Heart left ventricle (tissue), 16 donors: ENCODE measurements at regions of chr5 and their contacts with region 1.

Region 1: DNA sequence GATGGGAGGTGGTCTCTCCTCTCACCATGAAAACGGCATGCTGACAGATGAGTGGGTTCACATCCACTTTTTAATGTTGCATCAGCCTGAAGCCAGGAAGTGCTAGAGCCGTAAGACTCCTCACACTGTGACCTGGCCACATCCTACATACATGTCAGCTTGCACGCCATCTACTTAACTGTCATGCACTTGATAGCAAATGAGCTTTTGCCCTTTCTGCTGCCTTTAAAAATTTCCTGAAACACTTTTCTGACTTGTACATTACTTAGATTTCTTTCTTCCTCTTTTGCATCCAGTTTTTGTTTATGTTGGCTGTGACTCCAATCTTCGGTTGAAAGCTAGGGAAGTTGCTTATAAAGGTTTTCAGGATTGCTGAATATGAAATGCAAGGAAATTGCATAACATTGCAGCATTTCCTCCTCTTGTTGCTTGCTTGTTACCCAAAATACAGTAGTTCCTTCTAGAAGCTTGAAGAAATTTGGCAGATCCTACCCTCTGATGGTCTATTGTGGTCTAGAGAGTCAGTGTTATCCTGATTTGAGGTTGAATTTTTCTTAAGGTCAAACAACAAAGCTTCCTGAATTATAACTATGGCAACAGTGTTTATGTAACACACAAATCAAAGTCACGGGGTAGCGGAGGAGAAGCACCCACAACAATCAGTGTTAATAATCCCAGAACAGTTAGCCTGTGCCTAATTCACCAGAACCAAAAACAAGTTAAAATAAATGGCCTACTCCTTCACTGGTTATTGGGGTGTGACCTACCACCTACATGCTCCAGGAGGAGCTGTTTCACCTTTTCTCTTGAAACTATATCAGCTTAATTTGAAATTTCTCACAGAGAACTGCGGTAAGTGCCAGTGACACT is 232.5 kb downstream of the ARHGAP26 start:
- DNase-seq: peak in 1 of 5 donors; percentile 41
- ATAC-seq: peak; percentile 66 to 87 (median 82)
- H3K4me3 ChIP-seq: peak overlapping the region in 2 of 12 donors; percentile 6 to 8
- H3K27ac ChIP-seq: peak overlapping the region; percentile 14 to 89 (median 74)
- H3K4me1 ChIP-seq: peaks cover 7 to 81% (median 55%) of the 10 kb centered on the region in 12 donors
- H3K27me3 ChIP-seq: no peaks in the 10 kb centered on the region
- CTCF ChIP-seq: peak; percentile 26 to 67 (median 50)
- POLR2A ChIP-seq: no peak

Region 2: GRCh38 chr5:142959683-142960657 is 42.7 kb before region 1 on chr5:
- intact Hi-C with region 1: no loop called
- DNase-seq: no peak
- ATAC-seq: peak in 1 of 4 donors; percentile 5
- H3K4me3 ChIP-seq: no peak overlapping the region
- H3K27ac ChIP-seq: peak overlapping the region in 1 of 12 donors; percentile 27
- H3K4me1 ChIP-seq: peaks cover 0 to 63% (median 35%) of the 10 kb centered on the region in 12 donors
- H3K27me3 ChIP-seq: no peaks in the 10 kb centered on the region
- CTCF ChIP-seq: no peak
- POLR2A ChIP-seq: no peak

Region 3: DNA sequence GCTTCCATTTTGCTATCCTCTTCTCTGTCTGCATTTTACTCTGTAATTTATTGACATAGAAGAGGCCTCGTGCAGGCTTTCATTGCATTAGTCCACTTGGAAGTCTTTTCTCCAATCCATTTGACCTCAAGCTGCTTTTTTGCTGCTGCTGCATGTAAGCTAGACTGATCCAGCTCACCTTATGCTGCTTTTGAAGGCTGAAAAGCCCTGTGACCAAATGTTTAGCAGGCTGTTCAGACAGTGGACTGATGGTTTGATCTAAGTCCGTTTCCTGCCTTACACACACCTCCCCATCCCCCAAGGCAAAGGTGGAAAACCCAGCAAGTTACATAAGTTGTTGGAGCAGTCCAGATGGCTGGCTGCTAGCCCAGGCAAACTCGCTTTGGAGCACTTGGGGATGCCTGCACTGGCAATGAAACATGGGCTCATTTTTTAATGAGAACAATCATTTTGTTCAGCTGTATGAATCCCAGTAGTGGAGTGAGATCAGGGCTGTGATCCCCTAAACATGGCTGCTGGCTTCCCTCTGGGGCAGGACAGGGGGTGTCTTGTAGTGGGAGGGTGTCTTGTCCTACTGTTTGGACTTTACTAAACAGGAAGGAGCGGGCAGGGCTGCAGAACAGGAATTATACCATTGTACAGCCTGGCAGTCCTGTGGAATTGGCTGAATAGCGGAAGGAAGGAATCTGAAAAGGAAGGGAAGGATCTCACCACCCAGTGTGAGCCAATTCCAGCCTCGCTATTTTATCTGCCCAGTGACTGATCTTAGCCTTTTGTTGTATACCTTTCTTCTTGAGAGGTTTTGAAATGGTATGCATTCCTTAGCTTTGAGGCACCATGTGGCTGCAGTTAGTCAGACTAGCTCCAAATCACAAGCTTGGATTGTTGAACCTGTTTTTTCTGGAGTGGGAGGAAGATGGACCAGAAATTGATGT is 20.5 kb before region 1 on chr5:
- intact Hi-C with region 1: loop called in 1 of 10 experiments (anchors 2 kb)
- DNase-seq: peak; percentile 76 to 92 (median 88)
- ATAC-seq: peak; percentile 80 to 93 (median 92)
- H3K4me3 ChIP-seq: no peak overlapping the region
- H3K27ac ChIP-seq: peak overlapping the region; percentile 1 to 84 (median 75)
- H3K4me1 ChIP-seq: peaks cover 10 to 76% (median 42%) of the 10 kb centered on the region in 12 donors
- H3K27me3 ChIP-seq: no peaks in the 10 kb centered on the region
- CTCF ChIP-seq: no peak
- POLR2A ChIP-seq: no peak

Region 4: GRCh38 chr5:143200781-143201398 is 198.2 kb after region 1 on chr5:
- intact Hi-C with region 1: loop called in 2 of 10 experiments (anchors 5 to 10 kb)
- DNase-seq: peak in 4 of 5 donors; percentile 56 to 73 (median 68)
- ATAC-seq: peak; percentile 96 to 99 (median 98)
- H3K4me3 ChIP-seq: no peak overlapping the region
- H3K27ac ChIP-seq: peak overlapping the region in 7 of 12 donors; percentile 19 to 58 (median 45)
- H3K4me1 ChIP-seq: peaks cover 0 to 61% (median 33%) of the 10 kb centered on the region in 12 donors
- H3K27me3 ChIP-seq: no peaks in the 10 kb centered on the region
- CTCF ChIP-seq: no peak
- POLR2A ChIP-seq: no peak

Region 5: GRCh38 chr5:143290125-143290524 is 287.4 kb after region 1 on chr5:
- intact Hi-C with region 1: loop called in 1 of 10 experiments (anchors 10 kb)
- DNase-seq: no peak
- ATAC-seq: no peak
- H3K4me3 ChIP-seq: no peak overlapping the region
- H3K27ac ChIP-seq: no peak overlapping the region
- H3K4me1 ChIP-seq: peaks cover 0 to 5% (median 0%) of the 10 kb centered on the region in 12 donors
- H3K27me3 ChIP-seq: no peaks in the 10 kb centered on the region
- CTCF ChIP-seq: no peak
- POLR2A ChIP-seq: no peak